ENCODE measurements at regions of chr1 and their contacts with region 1.

Region 1: DNA sequence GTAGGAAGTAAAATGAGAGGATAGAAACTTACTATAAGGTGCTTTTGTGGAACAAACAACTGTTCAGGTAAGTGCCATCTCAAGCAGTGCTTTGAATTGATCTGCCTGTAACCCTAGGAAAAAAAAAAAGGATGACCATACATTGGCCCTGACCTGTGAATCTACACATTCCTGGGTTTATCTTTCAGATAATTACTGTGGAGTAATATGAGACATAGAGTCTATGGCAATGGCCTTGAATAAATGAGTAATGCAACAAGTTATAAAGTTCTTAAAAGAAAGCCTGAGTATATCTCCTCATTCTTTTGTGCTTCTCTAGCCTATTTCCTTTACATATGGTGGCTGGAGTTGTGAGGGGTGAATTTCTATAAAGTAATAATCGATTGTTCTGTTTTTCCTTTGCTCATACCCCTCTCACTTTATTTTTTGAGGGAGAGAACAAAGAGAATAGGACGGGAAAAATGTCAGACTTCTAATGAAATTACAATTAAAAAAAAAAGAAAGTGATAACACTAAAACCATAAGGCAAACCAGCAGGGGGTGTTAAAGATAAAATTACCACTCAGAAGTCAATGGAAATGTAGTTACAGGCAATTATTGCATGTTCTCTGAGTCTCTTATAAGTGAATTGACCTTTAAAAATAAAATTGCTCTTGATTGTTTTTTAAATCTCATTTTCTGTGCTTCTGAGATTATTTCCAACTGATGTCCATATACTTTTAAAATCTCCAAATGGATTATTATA is 12.4 kb upstream of the ATP1A1 start:
- DNase-seq: no peak
- H3K4me3 ChIP-seq: no peak overlapping the region
- H3K27ac ChIP-seq: no peak overlapping the region
- H3K4me1 ChIP-seq: peaks cover 14% of the 10 kb centered on the region
- H3K27me3 ChIP-seq: no peaks in the 10 kb centered on the region
- CTCF ChIP-seq: peak; percentile 32 to 46

Region 2: GRCh38 chr1:116418091-116418830 is 57.7 kb after region 1 on chr1:
- CTCF ChIA-PET with region 1: no interaction called
- dilution Hi-C with region 1: loop called (anchors 5 kb)
- in situ Hi-C with region 1: no loop called
- intact Hi-C with region 1: no loop called
- DNase-seq: peak; percentile 77
- H3K4me3 ChIP-seq: peak overlapping the region; percentile 62 to 83 (median 71)
- H3K27ac ChIP-seq: peak overlapping the region; percentile 74
- H3K4me1 ChIP-seq: peaks cover 14% of the 10 kb centered on the region
- H3K27me3 ChIP-seq: no peaks in the 10 kb centered on the region
- CTCF ChIP-seq: no peak

Region 3: DNA sequence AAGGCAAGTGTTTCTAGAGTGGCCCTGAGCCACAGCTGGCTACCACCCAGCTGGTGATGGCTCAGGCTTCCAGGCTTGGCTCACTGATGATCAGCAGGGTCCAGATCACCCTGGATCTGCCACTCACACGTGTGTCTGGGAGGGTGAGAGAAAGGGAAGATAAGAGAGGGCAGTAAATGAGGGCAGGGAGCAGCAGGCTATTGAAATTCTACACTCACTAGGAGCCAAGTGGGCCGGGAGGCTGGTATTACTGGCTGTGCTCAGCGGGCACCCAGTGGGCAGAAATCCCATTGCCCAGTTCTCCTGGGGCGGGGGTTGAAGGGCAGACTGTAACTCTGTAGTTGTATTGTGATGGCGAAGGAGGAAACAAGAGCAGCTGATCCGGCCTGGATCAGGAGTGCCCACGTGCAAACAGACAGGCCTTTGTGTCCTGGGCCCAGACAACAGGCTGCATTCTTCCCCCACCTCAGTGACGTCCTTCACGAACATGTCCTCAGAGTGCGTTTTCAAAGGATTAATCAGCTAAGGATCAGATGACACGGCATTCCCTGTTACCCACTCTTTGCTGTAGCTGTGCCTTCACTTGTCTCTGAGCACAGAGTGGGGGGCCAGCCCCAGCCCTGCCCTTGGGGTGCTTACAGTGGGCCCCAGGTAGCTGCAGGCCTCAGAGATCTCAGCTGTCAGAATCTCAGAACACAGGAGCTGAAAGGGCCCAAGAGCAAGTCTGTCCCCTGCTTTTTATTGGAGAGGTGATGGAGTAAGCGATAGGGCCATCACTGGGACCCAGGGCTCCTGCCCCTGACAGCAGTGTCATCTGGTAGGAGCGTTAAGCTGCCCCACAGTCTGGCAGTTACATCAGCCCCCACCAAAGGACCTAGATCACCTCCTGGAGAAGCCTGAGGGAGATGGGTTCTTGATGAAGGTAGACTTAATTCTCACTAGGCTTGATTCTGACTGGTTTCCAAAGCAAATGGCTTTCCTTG is 73.0 kb after region 1 on chr1:
- CTCF ChIA-PET with region 1: no interaction called
- dilution Hi-C with region 1: no loop called
- in situ Hi-C with region 1: no loop called
- intact Hi-C with region 1: no loop called
- DNase-seq: peak; percentile 94
- H3K4me3 ChIP-seq: no peak overlapping the region
- H3K27ac ChIP-seq: peak overlapping the region; percentile 81
- H3K4me1 ChIP-seq: peaks cover 20% of the 10 kb centered on the region
- H3K27me3 ChIP-seq: no peaks in the 10 kb centered on the region
- CTCF ChIP-seq: no peak